Mammary epithelial cell (primary cell): ENCODE measurements at regions of chr9 and their contacts with region 1.

Region 1: GRCh38 chr9:18255158-18255629 is 218.8 kb upstream of the ADAMTSL1 start:
- DNase-seq: peak; percentile 55
- H3K4me3 ChIP-seq: no peak overlapping the region
- H3K27ac ChIP-seq: no peak overlapping the region
- H3K4me1 ChIP-seq: peaks cover under 1% of the 10 kb centered on the region
- H3K27me3 ChIP-seq: no peaks in the 10 kb centered on the region
- CTCF ChIP-seq: peak; percentile 89 to 92

Region 2: DNA sequence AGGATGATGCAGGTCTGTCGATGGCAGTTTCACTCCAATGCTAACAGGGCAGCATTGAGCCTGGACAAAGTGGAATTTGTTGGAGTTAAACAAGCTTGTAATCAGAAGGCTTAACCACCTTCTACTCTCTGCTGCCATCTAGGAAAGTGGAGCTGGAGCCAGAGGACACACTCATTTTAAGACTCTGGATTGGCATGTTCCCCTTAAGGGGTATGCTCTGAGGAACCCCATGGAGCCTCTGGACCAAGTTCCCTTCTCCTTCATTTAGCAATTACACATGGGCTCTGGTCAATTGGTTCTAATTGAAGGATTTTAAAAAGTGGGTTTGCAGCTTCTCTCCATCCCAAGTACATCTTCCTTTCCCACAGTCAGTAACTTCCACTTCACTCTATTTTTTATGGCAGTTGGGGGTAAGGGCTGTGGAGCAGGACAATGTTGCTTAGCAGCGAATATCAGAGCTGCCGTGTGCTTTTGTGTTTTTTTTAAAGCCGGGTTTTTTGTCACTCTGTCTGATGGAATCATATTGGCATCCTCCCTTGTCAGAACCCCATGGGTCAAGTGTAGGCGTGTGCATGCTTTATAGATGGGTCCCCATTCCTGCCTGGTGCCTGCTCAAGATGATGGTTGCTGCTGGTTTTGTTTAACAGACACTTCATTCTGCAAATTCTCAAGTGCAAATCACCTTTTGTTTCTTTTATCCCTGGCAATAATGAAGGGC is 112.0 kb before region 1 on chr9:
- CTCF ChIA-PET with region 1: no interaction called
- dilution Hi-C with region 1: no loop called
- in situ Hi-C with region 1: no loop called
- intact Hi-C with region 1: no loop called
- DNase-seq: no peak
- H3K4me3 ChIP-seq: no peak overlapping the region
- H3K27ac ChIP-seq: no peak overlapping the region
- H3K4me1 ChIP-seq: no peaks in the 10 kb centered on the region
- H3K27me3 ChIP-seq: peaks cover 2% of the 10 kb centered on the region
- CTCF ChIP-seq: peak in 1 of 2 donors; percentile 28

Region 3: GRCh38 chr9:18393340-18394130 is 138.3 kb after region 1 on chr9:
- CTCF ChIA-PET with region 1: interaction called, 6 read pairs
- dilution Hi-C with region 1: loop called (anchors 10 kb)
- in situ Hi-C with region 1: loop called in 1 of 2 experiments (anchors 25 kb)
- intact Hi-C with region 1: loop called (anchors 1 kb)
- DNase-seq: peak; percentile 98
- H3K4me3 ChIP-seq: no peak overlapping the region
- H3K27ac ChIP-seq: peak overlapping the region; percentile 92
- H3K4me1 ChIP-seq: peaks cover 22% of the 10 kb centered on the region
- H3K27me3 ChIP-seq: no peaks in the 10 kb centered on the region
- CTCF ChIP-seq: no peak

Region 4: GRCh38 chr9:18442629-18443491 is 187.7 kb after region 1 on chr9:
- CTCF ChIA-PET with region 1: interaction called, 5 read pairs
- dilution Hi-C with region 1: no loop called
- in situ Hi-C with region 1: no loop called
- intact Hi-C with region 1: loop called (anchors 5 kb)
- DNase-seq: peak; percentile 64
- H3K4me3 ChIP-seq: no peak overlapping the region
- H3K27ac ChIP-seq: no peak overlapping the region
- H3K4me1 ChIP-seq: peaks cover 14% of the 10 kb centered on the region
- H3K27me3 ChIP-seq: no peaks in the 10 kb centered on the region
- CTCF ChIP-seq: peak; percentile 92 to 96

Region 5: DNA sequence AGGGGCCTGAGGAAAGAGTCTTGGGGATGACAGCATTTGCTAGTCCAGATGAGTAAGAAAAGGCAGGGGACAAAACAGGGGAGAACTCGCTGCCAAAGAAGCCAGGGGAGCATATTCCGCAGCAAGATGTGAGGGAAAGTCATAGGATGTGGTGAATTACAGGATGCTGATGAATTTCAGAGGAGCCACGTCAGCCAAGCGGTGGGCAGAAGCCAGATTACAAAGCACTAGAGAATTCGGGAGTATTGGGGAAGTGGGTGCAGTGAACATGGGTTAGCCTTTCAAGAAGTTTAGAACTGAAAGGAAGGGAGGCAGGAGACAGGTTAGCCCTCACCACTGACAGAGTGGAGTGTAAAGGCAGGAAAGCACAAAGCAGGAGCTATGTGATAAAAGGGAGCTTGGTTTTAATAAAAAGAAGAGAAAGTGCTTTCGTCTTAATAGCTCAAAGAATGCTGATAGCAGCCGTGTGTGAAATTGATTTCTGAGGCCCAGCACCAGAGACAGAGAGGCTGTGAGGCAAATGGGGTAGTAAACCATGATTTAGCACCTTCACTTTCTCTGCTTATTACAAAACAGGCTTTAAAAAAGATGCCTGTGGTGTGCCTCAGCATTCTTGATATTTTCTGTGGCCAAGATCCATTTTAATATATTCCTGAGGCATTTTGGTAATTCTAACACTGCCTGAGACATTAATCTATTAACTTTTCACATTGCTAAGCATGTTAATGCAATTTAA is 235.6 kb after region 1 on chr9:
- CTCF ChIA-PET with region 1: no interaction called
- dilution Hi-C with region 1: no loop called
- in situ Hi-C with region 1: no loop called
- intact Hi-C with region 1: loop called (anchors 10 kb)
- DNase-seq: peak; percentile 96
- H3K4me3 ChIP-seq: peak overlapping the region in 2 of 3 experiments; percentile 6 to 16
- H3K27ac ChIP-seq: peak overlapping the region; percentile 93
- H3K4me1 ChIP-seq: peaks cover 56% of the 10 kb centered on the region
- H3K27me3 ChIP-seq: no peaks in the 10 kb centered on the region
- CTCF ChIP-seq: no peak

Region 6: DNA sequence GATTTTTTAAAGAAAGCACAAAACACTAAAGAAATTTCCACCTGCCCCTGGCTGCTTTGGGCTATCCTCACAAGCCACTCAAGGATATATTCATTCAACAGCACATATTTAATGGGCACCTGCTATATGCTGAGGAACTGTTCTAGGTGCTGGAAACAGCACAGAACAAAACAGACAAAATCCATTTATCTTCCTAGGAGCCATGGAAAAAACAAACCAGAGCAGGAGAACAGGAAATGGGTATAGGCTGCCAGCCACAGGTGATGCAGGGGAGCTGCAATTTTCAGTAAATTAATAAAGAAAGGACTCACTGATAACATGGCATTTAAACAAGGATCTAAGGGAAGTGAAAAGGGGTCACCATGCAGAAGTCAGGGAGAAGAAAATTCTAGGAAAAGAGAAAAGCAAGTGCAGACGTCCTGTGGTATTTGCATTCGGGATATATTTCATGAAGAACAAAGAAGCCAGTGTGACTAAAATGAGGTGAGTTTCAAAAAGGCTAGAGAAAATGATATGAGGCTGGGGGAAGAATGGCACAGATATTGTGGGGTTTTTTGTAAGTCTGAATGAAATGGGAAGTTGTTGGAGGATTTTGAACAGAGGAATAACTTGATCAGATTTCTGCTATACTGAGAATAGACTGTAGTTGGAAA is 371.0 kb after region 1 on chr9:
- CTCF ChIA-PET with region 1: no interaction called
- dilution Hi-C with region 1: no loop called
- in situ Hi-C with region 1: no loop called
- intact Hi-C with region 1: loop called (anchors 1 kb)
- DNase-seq: peak; percentile 23
- H3K4me3 ChIP-seq: no peak overlapping the region
- H3K27ac ChIP-seq: no peak overlapping the region
- H3K4me1 ChIP-seq: no peaks in the 10 kb centered on the region
- H3K27me3 ChIP-seq: no peaks in the 10 kb centered on the region
- CTCF ChIP-seq: peak; percentile 41

Region 7: GRCh38 chr9:18824095-18824666 is 569.0 kb after region 1 on chr9:
- CTCF ChIA-PET with region 1: interaction called, 6 read pairs
- dilution Hi-C with region 1: no loop called
- in situ Hi-C with region 1: loop called (anchors 10 to 25 kb)
- intact Hi-C with region 1: loop called (anchors 1 kb)
- DNase-seq: peak; percentile 15
- H3K4me3 ChIP-seq: no peak overlapping the region
- H3K27ac ChIP-seq: no peak overlapping the region
- H3K4me1 ChIP-seq: no peaks in the 10 kb centered on the region
- H3K27me3 ChIP-seq: no peaks in the 10 kb centered on the region
- CTCF ChIP-seq: peak; percentile 54 to 68

Region 8: DNA sequence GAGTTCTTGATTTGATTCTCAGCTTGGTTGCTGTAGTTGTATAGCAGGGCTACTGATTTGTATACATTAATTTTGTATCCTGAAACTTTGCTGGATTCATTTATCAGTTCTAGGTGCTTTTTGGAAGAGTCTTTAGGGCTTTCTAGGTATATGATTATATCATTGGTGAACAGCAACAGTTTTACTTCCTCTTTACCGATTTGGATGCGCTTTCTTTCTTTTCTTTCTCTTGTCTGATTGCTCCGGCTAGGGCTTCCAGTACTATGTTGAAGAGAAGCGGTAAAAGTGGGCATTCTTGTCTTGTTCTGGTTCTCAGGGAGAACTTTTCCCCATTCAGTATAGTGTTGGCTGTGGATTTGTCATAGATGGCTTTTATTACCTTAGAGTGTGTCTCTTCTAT is 618.9 kb after region 1 on chr9:
- CTCF ChIA-PET with region 1: no interaction called
- dilution Hi-C with region 1: no loop called
- in situ Hi-C with region 1: no loop called
- intact Hi-C with region 1: no loop called
- DNase-seq: no peak
- H3K4me3 ChIP-seq: no peak overlapping the region
- H3K27ac ChIP-seq: no peak overlapping the region
- H3K4me1 ChIP-seq: no peaks in the 10 kb centered on the region
- H3K27me3 ChIP-seq: no peaks in the 10 kb centered on the region
- CTCF ChIP-seq: no peak

Region 9: DNA sequence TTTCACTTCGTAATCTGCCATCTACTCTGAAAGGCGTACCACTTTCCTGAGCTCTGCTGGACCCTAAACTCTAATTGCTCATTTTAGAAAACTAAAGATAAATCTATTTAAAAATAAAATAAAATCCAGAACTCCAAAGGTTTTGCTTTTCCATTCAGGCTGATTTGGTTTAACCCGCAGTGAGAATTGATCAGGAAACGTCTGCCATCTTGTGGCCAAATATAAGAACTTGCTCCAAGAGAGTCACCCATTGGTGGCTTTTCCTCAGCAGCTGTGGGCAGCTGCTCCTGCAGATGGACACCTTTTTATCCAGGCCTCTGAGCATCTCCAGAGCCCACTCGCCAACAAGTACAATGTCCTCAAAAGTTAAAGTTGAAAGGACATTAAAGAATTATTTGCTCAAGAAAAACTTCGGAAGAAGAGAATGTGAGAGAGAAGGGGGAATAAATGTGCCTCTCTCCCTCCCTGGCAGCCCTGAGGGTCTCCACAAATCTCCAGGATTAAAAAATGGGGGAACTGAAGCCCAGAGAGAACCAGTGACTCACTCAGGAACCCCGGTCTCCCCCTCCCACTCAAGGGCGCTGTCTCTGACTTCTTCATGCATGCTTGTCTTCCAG is 773.7 kb after region 1 on chr9:
- CTCF ChIA-PET with region 1: interaction called, 3 read pairs
- dilution Hi-C with region 1: no loop called
- in situ Hi-C with region 1: loop called in 1 of 2 experiments (anchors 25 kb)
- intact Hi-C with region 1: loop called (anchors 2 kb)
- DNase-seq: peak; percentile 40
- H3K4me3 ChIP-seq: no peak overlapping the region
- H3K27ac ChIP-seq: no peak overlapping the region
- H3K4me1 ChIP-seq: no peaks in the 10 kb centered on the region
- H3K27me3 ChIP-seq: no peaks in the 10 kb centered on the region
- CTCF ChIP-seq: peak; percentile 58 to 72